Endothelial cell of umbilical vein (primary cell): ENCODE measurements at regions of chr14 and their contacts with region 1.

Region 1: GRCh38 chr14:54566410-54567223 is at the start of gene SAMD4A:
- DNase-seq: peak; percentile 84
- H3K4me3 ChIP-seq: peak within 1 kb of the TSS; percentile 41 to 87 (median 75)
- H3K27ac ChIP-seq: peak within 1 kb of the TSS; percentile 80
- H3K4me1 ChIP-seq: peaks cover 38% of the 10 kb centered on the region
- H3K27me3 ChIP-seq: no peaks in the 10 kb centered on the region
- CTCF ChIP-seq: peak in 1 of 2 donors; percentile 34
- POLR2A ChIP-seq: no peak
- total RNA-seq, gene SAMD4A: 88.8 and 95.3 TPM in 2 replicates

Region 2: DNA sequence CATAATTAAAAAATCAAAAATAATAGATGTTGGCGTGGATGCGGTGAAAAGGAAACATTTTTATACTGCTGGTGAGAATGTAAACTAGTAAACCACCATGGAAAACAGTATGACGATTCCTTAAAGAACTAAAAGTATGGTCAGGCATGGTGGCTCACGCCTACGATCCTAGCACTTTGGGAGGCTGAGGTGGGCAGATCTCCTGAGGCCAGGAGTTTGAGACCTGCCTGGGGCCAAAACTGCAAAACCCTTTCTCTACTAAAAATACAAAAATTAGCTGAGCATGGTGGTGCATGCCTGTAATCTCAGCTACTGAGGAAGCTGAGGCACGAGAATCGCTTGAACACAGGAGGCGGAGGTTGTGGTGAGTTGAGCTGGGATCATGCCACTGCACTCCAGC is 414.3 kb before region 1 on chr14:
- CTCF ChIA-PET with region 1: no interaction called
- POLR2A ChIA-PET with region 1: no interaction called
- dilution Hi-C with region 1: no loop called
- intact Hi-C with region 1: no loop called
- DNase-seq: no peak
- H3K4me3 ChIP-seq: no peak overlapping the region
- H3K27ac ChIP-seq: no peak overlapping the region
- H3K4me1 ChIP-seq: peaks cover 5% of the 10 kb centered on the region
- H3K27me3 ChIP-seq: no peaks in the 10 kb centered on the region
- CTCF ChIP-seq: no peak
- POLR2A ChIP-seq: no peak

Region 3: GRCh38 chr14:54503476-54504257 is 63.0 kb before region 1 on chr14:
- CTCF ChIA-PET with region 1: no interaction called
- POLR2A ChIA-PET with region 1: no interaction called
- dilution Hi-C with region 1: no loop called
- intact Hi-C with region 1: no loop called
- DNase-seq: peak; percentile 37
- H3K4me3 ChIP-seq: no peak overlapping the region
- H3K27ac ChIP-seq: no peak overlapping the region
- H3K4me1 ChIP-seq: no peaks in the 10 kb centered on the region
- H3K27me3 ChIP-seq: peaks cover 0 to 8% of the 10 kb centered on the region in 2 experiments
- CTCF ChIP-seq: peak; percentile 39 to 43
- POLR2A ChIP-seq: no peak

Region 4: GRCh38 chr14:54529811-54530210 is 36.8 kb before region 1 on chr14:
- CTCF ChIA-PET with region 1: interaction called, 11 read pairs
- POLR2A ChIA-PET with region 1: interaction called, 5 read pairs
- dilution Hi-C with region 1: no loop called
- intact Hi-C with region 1: no loop called
- DNase-seq: peak; percentile 90
- H3K4me3 ChIP-seq: no peak overlapping the region
- H3K27ac ChIP-seq: no peak overlapping the region
- H3K4me1 ChIP-seq: peaks cover 9% of the 10 kb centered on the region
- H3K27me3 ChIP-seq: no peaks in the 10 kb centered on the region
- CTCF ChIP-seq: no peak
- POLR2A ChIP-seq: no peak

Region 5: DNA sequence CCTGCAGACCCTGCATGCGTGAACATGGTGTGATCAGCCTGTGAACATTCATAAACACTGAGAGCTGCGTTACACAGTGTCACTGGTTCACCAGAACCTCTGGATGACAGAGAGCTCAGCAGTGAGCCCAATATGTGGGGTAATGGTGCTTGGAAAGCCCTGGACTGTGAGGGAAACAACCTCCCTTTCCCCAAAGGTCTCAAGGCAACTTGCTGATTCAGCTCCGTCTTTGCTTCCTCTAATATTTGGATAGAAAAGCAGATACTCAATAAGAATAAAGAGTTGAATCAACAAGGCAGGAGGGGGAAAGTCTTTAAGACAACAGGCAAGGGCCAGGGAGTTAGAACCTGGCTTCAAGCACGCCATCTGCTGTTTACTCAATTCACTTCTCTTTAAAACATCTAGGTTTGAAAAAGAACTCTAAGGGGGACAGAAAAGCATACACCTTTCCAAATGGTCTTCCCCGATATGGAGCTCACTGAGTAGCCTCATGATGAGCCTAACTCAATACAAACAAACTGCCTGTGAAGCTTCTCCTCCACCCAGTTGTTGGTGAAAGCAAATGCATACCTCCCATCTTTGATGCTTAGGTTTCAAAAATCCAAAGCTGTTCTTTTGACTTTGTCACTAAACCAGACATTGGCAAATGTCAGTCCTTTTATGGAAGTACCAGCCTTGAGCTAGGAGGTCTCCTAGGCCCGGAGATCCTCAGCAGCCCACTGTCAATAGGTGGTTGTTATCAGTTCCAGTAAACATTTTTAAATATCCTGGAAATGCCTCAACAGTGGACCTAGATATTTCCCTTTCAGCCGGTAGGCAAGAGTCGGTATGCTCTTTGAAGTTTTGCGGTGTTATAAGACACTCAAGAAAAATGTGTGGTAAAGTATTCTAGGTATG is 76.4 kb after region 1 on chr14:
- CTCF ChIA-PET with region 1: interaction called, 35 read pairs
- POLR2A ChIA-PET with region 1: interaction called, 3 read pairs
- dilution Hi-C with region 1: no loop called
- intact Hi-C with region 1: loop called (anchors 2 kb)
- DNase-seq: no peak
- H3K4me3 ChIP-seq: no peak overlapping the region
- H3K27ac ChIP-seq: no peak overlapping the region
- H3K4me1 ChIP-seq: peaks cover 4% of the 10 kb centered on the region
- H3K27me3 ChIP-seq: no peaks in the 10 kb centered on the region
- CTCF ChIP-seq: peak in 1 of 2 donors; percentile 26
- POLR2A ChIP-seq: no peak

Region 6: DNA sequence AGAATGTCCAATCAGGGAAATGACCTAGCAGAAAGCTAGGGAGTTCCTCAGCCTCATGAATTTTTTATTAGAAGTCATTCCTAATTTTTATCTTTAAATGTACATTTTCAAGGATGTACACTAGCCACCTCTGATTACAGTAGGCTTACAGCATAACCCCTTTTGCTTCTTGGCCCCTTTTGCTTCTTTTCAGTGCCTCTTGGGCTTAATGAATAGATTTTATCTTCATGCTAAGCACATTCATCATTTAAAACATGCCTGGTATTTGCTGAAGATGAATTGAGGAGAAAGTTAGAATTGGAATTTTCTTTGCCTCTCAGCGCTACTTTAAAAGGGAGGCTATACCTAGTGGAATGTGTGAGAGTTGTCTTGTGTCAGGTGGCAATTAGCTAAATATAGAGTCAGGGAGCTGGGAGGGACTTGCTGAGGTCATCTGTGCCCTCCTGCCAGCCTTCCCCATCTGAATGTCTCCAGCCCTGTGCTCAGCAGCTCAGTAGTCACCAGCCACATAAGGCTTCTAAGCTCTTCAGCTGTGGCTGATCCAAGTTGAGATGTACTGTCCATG is 132.4 kb after region 1 on chr14:
- CTCF ChIA-PET with region 1: interaction called, 11 read pairs
- POLR2A ChIA-PET with region 1: no interaction called
- dilution Hi-C with region 1: no loop called
- intact Hi-C with region 1: no loop called
- DNase-seq: no peak
- H3K4me3 ChIP-seq: no peak overlapping the region
- H3K27ac ChIP-seq: no peak overlapping the region
- H3K4me1 ChIP-seq: peaks cover 15% of the 10 kb centered on the region
- H3K27me3 ChIP-seq: no peaks in the 10 kb centered on the region
- CTCF ChIP-seq: no peak
- POLR2A ChIP-seq: no peak

Region 7: DNA sequence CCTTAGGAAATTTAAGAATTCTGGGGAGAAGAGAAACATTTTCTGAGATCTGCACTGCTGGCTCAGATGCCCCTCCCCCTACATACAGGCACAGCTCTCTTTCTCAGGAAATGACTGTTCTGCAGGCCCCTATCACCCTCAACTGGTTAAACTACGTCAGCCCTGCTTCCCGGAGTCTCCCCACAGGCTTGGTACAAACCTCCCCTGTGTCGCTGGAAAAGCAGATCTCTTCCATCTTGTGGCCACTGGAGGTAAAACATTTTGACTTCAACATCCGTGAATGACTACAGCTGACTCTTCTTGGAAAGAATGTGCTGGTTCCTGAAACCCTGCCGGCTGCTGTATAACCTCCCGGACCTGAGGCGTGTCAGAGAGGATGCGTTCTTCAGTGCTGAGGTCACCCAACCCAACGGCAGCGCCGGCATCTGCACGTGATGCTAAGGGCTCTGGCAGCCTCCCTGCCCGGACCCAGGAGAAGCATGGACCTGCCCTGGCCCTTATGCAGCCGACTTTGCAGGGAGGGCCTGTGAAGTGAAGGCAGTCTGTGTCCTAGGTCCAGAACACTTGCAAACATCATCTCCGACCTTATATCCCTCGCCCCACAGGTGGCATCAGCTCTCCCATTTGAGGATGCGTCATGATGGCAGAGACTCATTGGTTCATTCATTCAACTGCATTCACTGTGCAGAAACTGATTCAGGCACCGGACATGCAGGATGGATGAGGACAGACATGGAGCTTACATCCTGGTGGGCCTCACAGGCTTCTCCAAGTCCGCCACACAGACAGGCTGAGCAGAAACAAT is 206.8 kb after region 1 on chr14:
- CTCF ChIA-PET with region 1: interaction called, 286 read pairs
- POLR2A ChIA-PET with region 1: interaction called, 54 read pairs
- dilution Hi-C with region 1: no loop called
- intact Hi-C with region 1: loop called (anchors 1 kb)
- DNase-seq: peak; percentile 99
- H3K4me3 ChIP-seq: no peak overlapping the region
- H3K27ac ChIP-seq: peak overlapping the region; percentile 99
- H3K4me1 ChIP-seq: peaks cover 28% of the 10 kb centered on the region
- H3K27me3 ChIP-seq: no peaks in the 10 kb centered on the region
- CTCF ChIP-seq: peak; percentile 66 to 71
- POLR2A ChIP-seq: peak; percentile 80

Region 8: GRCh38 chr14:54830650-54831049 is 264.0 kb after region 1 on chr14:
- CTCF ChIA-PET with region 1: no interaction called
- POLR2A ChIA-PET with region 1: no interaction called
- dilution Hi-C with region 1: no loop called
- intact Hi-C with region 1: no loop called
- DNase-seq: no peak
- H3K4me3 ChIP-seq: no peak overlapping the region
- H3K27ac ChIP-seq: no peak overlapping the region
- H3K4me1 ChIP-seq: no peaks in the 10 kb centered on the region
- H3K27me3 ChIP-seq: peaks cover 11 to 13% of the 10 kb centered on the region in 2 experiments
- CTCF ChIP-seq: no peak
- POLR2A ChIP-seq: no peak

Region 9: GRCh38 chr14:54893151-54893760 is 326.6 kb after region 1 on chr14:
- CTCF ChIA-PET with region 1: interaction called, 10 read pairs
- POLR2A ChIA-PET with region 1: no interaction called
- dilution Hi-C with region 1: no loop called
- intact Hi-C with region 1: loop called (anchors 1 kb)
- DNase-seq: peak; percentile 77
- H3K4me3 ChIP-seq: no peak overlapping the region
- H3K27ac ChIP-seq: no peak overlapping the region
- H3K4me1 ChIP-seq: peaks cover 6% of the 10 kb centered on the region
- H3K27me3 ChIP-seq: no peaks in the 10 kb centered on the region
- CTCF ChIP-seq: peak; percentile 58 to 61
- POLR2A ChIP-seq: no peak